Dorsolateral prefrontal cortex (tissue), 120 donors: ENCODE measurements at regions of chr9 and their contacts with region 1.

Region 1: GRCh38 chr9:123482295-123482968 is 126.4 kb downstream of the CRB2 start:
- DNase-seq: peak in 1 of 10 donors; percentile 2
- H3K4me3 ChIP-seq: no peak overlapping the region
- H3K27ac ChIP-seq: no peak overlapping the region
- H3K27me3 ChIP-seq: no peaks in the 10 kb centered on the region
- CTCF ChIP-seq: no peak

Region 2: GRCh38 chr9:123282362-123283047 is 199.9 kb before region 1 on chr9:
- intact Hi-C with region 1: no loop called
- DNase-seq: peak in 1 of 10 donors; percentile 33
- H3K4me3 ChIP-seq: no peak overlapping the region
- H3K27ac ChIP-seq: no peak overlapping the region
- H3K27me3 ChIP-seq: no peaks in the 10 kb centered on the region
- CTCF ChIP-seq: no peak

Region 3: DNA sequence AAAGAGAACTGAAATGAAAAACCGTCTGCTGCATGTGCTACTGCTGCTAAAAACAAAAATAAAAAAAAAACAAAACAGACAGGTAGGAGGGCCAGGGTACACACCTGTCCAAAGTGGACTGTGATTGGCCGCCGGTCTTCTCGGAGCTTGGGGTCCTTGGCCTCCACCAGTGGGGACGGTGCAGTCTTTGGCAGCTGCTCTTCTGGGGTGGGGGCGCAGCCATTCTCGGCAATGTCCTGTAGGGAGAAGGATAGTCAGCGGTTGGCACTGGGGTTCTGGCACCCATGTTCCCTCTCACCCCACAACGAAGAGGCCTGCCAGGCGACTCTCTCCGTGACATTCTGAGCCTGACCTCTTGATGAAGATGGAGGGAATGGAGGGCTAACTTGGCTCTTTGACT is 42.2 kb before region 1 on chr9:
- intact Hi-C with region 1: loop called in 1 of 2 experiments (anchors 5 kb)
- DNase-seq: peak in 1 of 10 donors; percentile 22
- H3K4me3 ChIP-seq: no peak overlapping the region
- H3K27ac ChIP-seq: no peak overlapping the region
- H3K27me3 ChIP-seq: no peaks in the 10 kb centered on the region
- CTCF ChIP-seq: no peak